ENCODE measurements at regions of chr2 and their contacts with region 1.

Region 1: GRCh38 chr2:197216361-197216979 is 94.1 kb downstream of the ANKRD44 start:
- DNase-seq: no peak
- ATAC-seq: no peak
- H3K4me3 ChIP-seq: no peak overlapping the region
- H3K27ac ChIP-seq: no peak overlapping the region
- H3K4me1 ChIP-seq: no peaks in the 10 kb centered on the region
- H3K27me3 ChIP-seq: no peaks in the 10 kb centered on the region
- CTCF ChIP-seq: no peak

Region 2: GRCh38 chr2:196839574-196839973 is 376.9 kb before region 1 on chr2:
- CTCF ChIA-PET with region 1: no interaction called
- POLR2A ChIA-PET with region 1: interaction called, 11 read pairs
- in situ Hi-C with region 1: no loop called
- intact Hi-C with region 1: no loop called
- DNase-seq: no peak
- ATAC-seq: no peak
- H3K4me3 ChIP-seq: no peak overlapping the region
- H3K27ac ChIP-seq: no peak overlapping the region
- H3K4me1 ChIP-seq: no peaks in the 10 kb centered on the region; the same call in 1 of the 2 replicates
- H3K27me3 ChIP-seq: no peaks in the 10 kb centered on the region
- CTCF ChIP-seq: no peak

Measured in Panc1 (cell line).